ENCODE measurements at regions of chr5 and their contacts with region 1.

Region 1: GRCh38 chr5:137228816-137229215 is 270.3 kb downstream of the SPOCK1 start:
- DNase-seq: no peak
- H3K4me3 ChIP-seq: no peak overlapping the region
- CTCF ChIP-seq: no peak

Region 2: DNA sequence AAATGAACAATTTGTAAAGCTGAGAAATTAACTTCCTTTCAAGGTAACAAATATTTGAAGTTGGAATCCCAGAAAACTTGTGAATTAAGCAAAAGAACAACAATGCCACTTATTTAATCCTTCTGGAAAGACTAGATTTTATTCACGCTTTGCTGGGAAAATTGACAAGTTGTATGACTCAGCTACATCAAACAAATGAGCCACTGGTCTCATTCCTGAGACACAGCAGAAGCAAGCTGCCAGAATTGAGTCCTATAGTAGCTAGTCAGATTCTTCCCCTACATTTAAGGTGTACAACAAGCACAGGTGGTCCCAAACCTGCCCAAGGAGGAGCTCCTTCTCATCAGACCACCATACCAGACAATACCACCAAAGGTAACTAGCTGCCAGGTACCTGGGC is 10.3 kb before region 1 on chr5:
- CTCF ChIA-PET with region 1: interaction called, 12 read pairs
- POLR2A ChIA-PET with region 1: no interaction called
- DNase-seq: no peak
- H3K4me3 ChIP-seq: no peak overlapping the region
- CTCF ChIP-seq: no peak